Ascending aorta (tissue), 2 donors: ENCODE measurements at regions of chr18 and their contacts with region 1.

Region 1: GRCh38 chr18:13222856-13223281 is 4.3 kb downstream of the LDLRAD4 start:
- DNase-seq: no peak
- H3K4me3 ChIP-seq: peak overlapping the region; percentile 20 to 91
- H3K27ac ChIP-seq: peak overlapping the region; percentile 67 to 92
- H3K4me1 ChIP-seq: peaks cover 13 to 34% of the 10 kb centered on the region in 2 donors
- H3K27me3 ChIP-seq: no peaks in the 10 kb centered on the region
- CTCF ChIP-seq: no peak

Region 2: DNA sequence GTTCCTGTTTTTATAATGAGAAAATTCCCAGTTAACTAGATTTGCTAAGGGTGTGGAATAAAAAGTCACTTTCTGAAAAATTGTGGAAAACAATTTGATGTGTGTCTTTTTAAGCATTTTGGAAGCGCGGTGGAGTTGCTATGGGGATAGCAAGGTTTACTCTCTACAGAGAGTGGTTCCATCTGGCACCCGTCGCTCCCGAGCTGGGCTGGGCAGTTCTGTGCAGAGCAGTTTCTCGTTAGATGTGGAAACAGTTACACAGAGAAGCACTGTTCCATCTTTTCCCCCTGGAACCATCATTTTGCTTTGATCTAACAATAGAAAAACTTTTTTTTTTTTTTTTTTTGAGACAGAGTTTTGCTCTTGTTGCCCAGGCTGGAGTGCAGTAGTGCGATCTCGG is 13.1 kb after region 1 on chr18:
- intact Hi-C with region 1: loop called (anchors 1 kb)
- DNase-seq: peak in 1 of 2 donors; percentile 86
- H3K4me3 ChIP-seq: peak overlapping the region; percentile 4 to 21
- H3K27ac ChIP-seq: peak overlapping the region; percentile 61
- H3K4me1 ChIP-seq: peaks cover 0 to 24% of the 10 kb centered on the region in 2 donors
- H3K27me3 ChIP-seq: no peaks in the 10 kb centered on the region
- CTCF ChIP-seq: no peak